ENCODE measurements at regions of chr1 and their contacts with region 1.

Region 1: DNA sequence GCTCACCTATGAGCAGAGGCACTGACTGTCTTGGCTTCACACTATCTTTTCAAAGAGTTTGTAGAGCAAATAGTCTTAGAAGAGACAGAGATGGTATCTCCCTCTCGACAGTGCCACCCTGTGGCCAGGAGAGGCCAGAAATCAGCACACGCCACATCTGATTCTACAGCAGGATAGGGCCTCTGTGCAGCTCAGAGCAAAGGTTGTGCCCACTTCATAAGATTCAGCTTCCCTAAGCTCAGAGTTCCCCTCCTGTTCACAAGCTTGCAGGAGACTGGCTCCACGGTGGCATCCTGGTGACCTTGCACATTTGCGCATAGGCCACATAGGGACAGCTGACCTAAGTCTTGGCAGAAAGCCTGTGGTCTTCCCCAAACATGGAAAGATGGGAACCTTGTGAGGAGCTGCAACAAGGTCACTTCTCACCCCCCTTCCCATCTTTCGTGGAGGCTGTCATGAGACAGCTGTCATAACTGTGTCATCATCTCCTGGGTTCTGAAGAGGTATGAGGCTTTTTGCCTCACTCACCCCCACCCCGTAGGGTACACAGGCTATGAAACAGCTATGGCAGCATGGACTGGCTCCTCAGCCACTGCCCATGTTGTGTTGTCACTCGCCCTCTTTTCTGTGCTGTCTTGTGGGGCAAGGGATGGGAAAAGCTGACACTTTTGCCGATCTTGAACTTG is 3.0 kb downstream of the ITLN2 start:
- DNase-seq: peak; percentile 71
- ATAC-seq: peak; percentile 60
- H3K4me3 Mint-ChIP-seq: no peak overlapping the region
- H3K27ac Mint-ChIP-seq: no peak overlapping the region
- H3K4me1 Mint-ChIP-seq: peaks cover 38% of the 10 kb centered on the region
- H3K27me3 Mint-ChIP-seq: no peaks in the 10 kb centered on the region
- CTCF ChIP-seq: peak; percentile 58

Region 2: GRCh38 chr1:160681067-160681890 is 270.3 kb before region 1 on chr1:
- CTCF ChIA-PET with region 1: interaction called, 21 read pairs
- POLR2A ChIA-PET with region 1: no interaction called
- DNase-seq: peak; percentile 93
- ATAC-seq: peak; percentile 100
- H3K4me3 Mint-ChIP-seq: no peak overlapping the region
- H3K27ac Mint-ChIP-seq: no peak overlapping the region
- H3K4me1 Mint-ChIP-seq: peaks cover 9% of the 10 kb centered on the region
- H3K27me3 Mint-ChIP-seq: no peaks in the 10 kb centered on the region; the same call in 1 of the 2 replicates
- CTCF ChIP-seq: peak; percentile 86

Region 3: DNA sequence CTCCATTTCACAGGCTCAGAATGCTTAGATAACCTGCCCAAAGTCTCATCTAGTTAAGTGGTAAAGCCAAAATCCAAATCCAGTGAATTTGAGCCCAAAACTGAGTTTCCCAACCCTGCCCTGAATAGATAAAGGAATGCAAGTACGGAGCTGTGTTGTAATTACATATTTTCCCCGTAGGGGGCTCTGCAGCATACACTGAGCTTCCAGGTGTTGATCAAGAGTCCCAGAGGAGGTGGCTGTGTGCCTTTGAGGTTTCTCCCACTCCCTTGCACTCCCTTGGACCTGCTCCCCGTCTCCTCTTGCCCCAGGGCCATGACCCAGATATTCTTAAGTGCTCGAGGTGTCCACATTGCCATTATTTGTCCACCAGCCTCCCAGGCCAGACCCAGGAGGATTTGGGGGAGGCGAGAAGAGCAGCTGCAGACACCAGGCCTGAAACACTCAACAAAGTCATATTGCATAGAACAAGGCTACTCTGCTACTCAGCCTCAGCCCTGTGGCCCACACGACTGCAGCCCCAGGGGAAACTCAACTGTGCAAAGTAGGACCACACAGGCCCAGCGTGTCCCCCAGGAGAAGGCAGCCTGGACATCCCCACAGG is 174.0 kb before region 1 on chr1:
- CTCF ChIA-PET with region 1: interaction called, 23 read pairs
- POLR2A ChIA-PET with region 1: no interaction called
- DNase-seq: peak; percentile 57
- ATAC-seq: peak; percentile 81
- H3K4me3 Mint-ChIP-seq: no peak overlapping the region
- H3K27ac Mint-ChIP-seq: no peak overlapping the region
- H3K4me1 Mint-ChIP-seq: peaks cover 18% of the 10 kb centered on the region
- H3K27me3 Mint-ChIP-seq: peaks cover 4% of the 10 kb centered on the region
- CTCF ChIP-seq: peak; percentile 68

Region 4: GRCh38 chr1:160837558-160838205 is 113.9 kb before region 1 on chr1:
- CTCF ChIA-PET with region 1: interaction called, 78 read pairs
- POLR2A ChIA-PET with region 1: no interaction called
- DNase-seq: no peak
- ATAC-seq: peak; percentile 46; the same call in 1 of the 2 replicates
- H3K4me3 Mint-ChIP-seq: no peak overlapping the region
- H3K27ac Mint-ChIP-seq: no peak overlapping the region
- H3K4me1 Mint-ChIP-seq: peaks cover 21% of the 10 kb centered on the region
- H3K27me3 Mint-ChIP-seq: no peaks in the 10 kb centered on the region; the same call in 1 of the 2 replicates
- CTCF ChIP-seq: no peak

Region 5: DNA sequence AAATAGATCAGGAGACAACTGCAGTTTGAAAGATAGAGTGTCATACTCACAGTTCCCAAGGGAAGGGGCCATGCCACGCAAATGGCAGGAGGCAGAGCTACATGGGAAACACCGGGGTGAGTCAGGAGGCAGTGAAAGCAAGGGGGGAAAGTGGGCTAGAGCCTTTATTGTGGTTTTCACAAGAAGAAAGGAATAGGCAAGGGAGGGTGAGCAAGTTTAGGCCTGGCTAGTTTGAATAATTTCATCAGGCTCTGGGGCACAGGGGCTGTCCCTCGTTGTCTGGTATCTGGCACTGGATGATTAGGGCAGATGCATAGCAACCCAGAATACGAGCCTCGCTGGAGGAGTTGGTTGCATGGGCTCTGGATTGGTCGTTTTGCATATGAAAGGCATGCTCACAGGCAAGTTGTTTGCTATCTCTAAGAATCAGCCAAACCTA is 20.1 kb after region 1 on chr1:
- CTCF ChIA-PET with region 1: interaction called, 47 read pairs
- POLR2A ChIA-PET with region 1: no interaction called
- DNase-seq: peak; percentile 35
- ATAC-seq: peak; percentile 95
- H3K4me3 Mint-ChIP-seq: no peak overlapping the region
- H3K27ac Mint-ChIP-seq: peak overlapping the region; percentile 79
- H3K4me1 Mint-ChIP-seq: peaks cover 33% of the 10 kb centered on the region
- H3K27me3 Mint-ChIP-seq: no peaks in the 10 kb centered on the region
- CTCF ChIP-seq: no peak

Region 6: GRCh38 chr1:160997323-160998038 is 45.9 kb after region 1 on chr1:
- CTCF ChIA-PET with region 1: interaction called, 141 read pairs
- POLR2A ChIA-PET with region 1: no interaction called
- DNase-seq: peak; percentile 64
- ATAC-seq: peak; percentile 93
- H3K4me3 Mint-ChIP-seq: no peak overlapping the region
- H3K27ac Mint-ChIP-seq: peak overlapping the region; percentile 63
- H3K4me1 Mint-ChIP-seq: peaks cover 5% of the 10 kb centered on the region
- H3K27me3 Mint-ChIP-seq: no peaks in the 10 kb centered on the region
- CTCF ChIP-seq: no peak

Region 7: GRCh38 chr1:161032409-161032808 is 80.8 kb after region 1 on chr1:
- CTCF ChIA-PET with region 1: no interaction called
- POLR2A ChIA-PET with region 1: no interaction called
- DNase-seq: no peak
- ATAC-seq: no peak
- H3K4me3 Mint-ChIP-seq: no peak overlapping the region
- H3K27ac Mint-ChIP-seq: no peak overlapping the region; the same call in 1 of the 2 replicates
- H3K4me1 Mint-ChIP-seq: peaks cover 20% of the 10 kb centered on the region
- H3K27me3 Mint-ChIP-seq: no peaks in the 10 kb centered on the region
- CTCF ChIP-seq: no peak